Activated CD8-positive, alpha-beta memory T cell treated with anti-CD3 and anti-CD28 coated beads, Interleukin-2, amount 10 ng/mL, durations not matched to agents 7 days and 5 days (primary cell): ENCODE measurements at regions of chr10 and their contacts with region 1.

Region 1: DNA sequence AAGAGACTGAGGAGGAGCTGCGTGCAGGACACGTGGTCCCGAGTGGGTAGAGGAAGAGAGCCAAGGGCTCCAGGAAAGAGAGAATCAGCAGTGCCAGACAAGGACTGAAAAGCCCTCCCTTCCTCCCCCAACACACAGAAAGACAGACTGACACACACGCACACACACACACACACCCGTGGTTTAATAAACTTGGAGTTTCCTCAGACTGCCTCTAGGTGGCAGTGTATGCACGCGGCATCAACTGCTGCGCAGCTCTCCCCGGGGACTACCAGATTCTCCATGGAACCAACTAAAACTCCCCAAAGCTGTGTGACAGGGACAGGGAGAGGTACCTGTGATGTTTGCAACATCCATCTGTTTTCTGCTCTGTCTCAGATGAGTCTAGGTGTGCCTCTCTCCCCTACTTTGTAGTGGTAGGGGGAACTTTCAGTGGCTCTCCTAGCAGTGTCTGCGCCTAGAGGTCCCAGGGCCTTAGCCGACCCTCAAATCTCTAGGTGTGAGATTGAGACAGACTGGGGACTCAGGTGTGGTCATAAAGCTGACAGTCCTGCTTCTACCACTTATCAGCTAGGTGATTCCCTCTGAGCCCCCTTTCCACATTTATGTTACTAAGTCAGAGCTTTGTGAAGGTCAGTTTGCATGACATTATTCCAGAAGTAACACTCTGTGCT is 9.3 kb upstream of the TSPAN14 start:
- DNase-seq: peak; percentile 74
- ATAC-seq: peak; percentile 90
- H3K4me3 Mint-ChIP-seq: no peak overlapping the region
- H3K27ac Mint-ChIP-seq: peak overlapping the region; percentile 72
- H3K4me1 Mint-ChIP-seq: peaks cover 20% of the 10 kb centered on the region
- H3K27me3 Mint-ChIP-seq: peaks cover 12% of the 10 kb centered on the region

Region 2: DNA sequence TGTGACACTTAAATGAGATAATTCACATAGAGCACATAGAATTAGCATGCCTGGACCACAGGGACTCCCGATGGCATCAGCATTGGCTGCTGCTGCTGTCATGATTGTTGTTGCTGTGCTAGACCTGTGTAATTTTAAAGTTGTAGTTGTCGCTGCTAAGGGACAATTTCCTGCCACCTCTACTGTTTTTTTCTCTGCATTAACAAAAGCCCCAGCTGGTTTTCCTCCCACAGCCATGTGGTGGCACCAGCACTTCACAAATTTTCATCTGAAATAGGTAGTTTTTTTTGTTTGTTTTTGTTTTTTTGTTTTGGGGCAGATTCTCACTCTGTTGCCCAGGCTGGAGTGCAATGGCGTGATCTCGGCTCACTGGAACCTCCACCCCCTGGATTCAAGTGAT is 61.8 kb before region 1 on chr10:
- CTCF ChIA-PET with region 1: interaction called, 21 read pairs
- DNase-seq: peak; percentile 72
- ATAC-seq: peak; percentile 59
- H3K4me3 Mint-ChIP-seq: no peak overlapping the region
- H3K27ac Mint-ChIP-seq: no peak overlapping the region
- H3K4me1 Mint-ChIP-seq: peaks cover 14% of the 10 kb centered on the region
- H3K27me3 Mint-ChIP-seq: peaks cover 13% of the 10 kb centered on the region

Region 3: GRCh38 chr10:80397014-80397413 is 47.8 kb before region 1 on chr10:
- CTCF ChIA-PET with region 1: no interaction called
- DNase-seq: no peak
- ATAC-seq: no peak
- H3K4me3 Mint-ChIP-seq: no peak overlapping the region
- H3K27ac Mint-ChIP-seq: no peak overlapping the region
- H3K4me1 Mint-ChIP-seq: no peaks in the 10 kb centered on the region
- H3K27me3 Mint-ChIP-seq: peaks cover 8% of the 10 kb centered on the region

Region 4: DNA sequence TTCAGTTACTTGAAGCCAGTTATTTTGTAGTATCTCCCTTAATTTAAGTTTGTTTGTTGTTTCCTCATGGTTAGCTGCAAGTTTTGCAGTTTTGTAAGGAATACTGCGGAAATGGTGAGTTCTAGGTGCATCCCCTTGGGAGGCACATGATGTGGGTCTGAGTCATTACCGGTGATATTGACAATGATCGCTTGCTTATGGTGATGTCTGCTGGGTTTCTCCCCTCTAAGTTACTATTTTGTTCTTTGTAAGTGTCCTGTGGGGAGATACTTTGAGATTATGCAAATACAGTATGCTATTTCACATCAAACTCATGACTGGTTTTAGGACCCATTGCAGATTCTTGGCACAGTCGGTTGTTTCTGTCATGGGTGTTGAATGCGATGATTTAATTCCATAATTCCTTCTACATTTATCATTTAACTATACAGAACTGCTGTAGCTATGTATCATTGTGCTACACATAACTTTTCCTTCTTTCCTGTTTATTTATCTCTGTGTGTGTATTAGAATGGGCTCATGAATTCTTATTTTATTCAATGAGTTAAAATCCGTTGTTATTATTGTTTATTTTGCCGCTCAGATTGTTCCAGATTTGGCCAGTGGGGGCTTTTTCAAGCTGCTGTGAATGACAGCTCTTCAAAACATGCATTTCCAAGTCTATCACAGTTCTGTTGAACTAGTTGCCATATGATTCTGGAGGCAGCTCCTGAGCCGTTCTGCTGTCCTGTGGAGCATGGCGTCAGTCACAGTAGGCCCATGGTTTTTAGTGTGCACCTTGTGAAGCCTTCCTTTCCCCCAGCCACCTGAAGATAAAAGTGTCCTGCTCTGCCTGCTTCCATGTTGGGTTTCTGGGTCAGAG is 27.7 kb after region 1 on chr10:
- CTCF ChIA-PET with region 1: interaction called, 20 read pairs
- DNase-seq: peak; percentile 66
- ATAC-seq: peak; percentile 65
- H3K4me3 Mint-ChIP-seq: peak overlapping the region; percentile 2
- H3K27ac Mint-ChIP-seq: peak overlapping the region; percentile 78
- H3K4me1 Mint-ChIP-seq: peaks cover 82% of the 10 kb centered on the region
- H3K27me3 Mint-ChIP-seq: no peaks in the 10 kb centered on the region

Region 5: DNA sequence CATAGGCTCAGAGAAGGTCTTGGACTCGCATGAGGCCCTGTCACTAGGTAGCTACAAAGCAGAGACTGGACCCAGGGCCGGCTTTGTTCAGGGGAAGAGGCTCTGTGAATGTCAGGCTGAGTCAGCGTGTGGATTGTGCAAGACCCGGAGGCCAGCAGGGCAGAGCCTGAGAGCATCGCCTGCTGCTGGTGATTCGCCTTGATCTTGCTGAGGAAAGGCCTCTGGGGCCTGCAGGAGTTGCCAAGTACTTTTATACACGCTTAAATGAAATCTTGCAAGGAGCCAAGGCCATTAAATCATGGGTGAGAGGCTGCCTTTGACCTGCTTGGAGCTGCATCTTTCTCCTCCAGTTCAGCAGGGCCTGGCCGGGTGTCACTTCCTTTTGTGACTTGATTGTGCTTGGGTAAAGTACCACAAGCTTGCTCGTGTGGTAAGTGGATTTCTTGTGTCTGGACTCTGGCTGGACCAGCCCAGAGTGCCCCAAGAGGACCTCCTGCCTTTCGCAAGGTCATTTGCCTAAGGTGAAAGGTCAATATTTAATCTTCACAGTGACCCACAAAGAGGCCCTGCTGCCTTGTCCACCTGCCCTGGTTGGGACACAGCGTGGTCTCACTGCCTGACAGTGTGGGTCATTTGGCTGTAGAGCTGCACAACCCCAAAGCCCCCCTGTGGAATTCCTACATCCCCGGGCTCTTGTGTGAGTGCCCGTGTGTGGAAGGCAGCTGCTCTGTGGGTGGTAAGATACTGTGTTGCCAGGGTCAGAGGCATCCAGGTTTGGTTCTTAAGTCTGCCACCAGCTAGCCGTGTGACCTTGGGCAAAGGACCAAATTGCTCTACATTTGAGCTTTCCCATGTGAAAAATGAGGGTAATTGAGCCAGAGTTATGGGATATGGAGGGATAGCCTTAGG is 54.3 kb after region 1 on chr10:
- CTCF ChIA-PET with region 1: interaction called, 579 read pairs
- DNase-seq: peak; percentile 77
- ATAC-seq: peak; percentile 82
- H3K4me3 Mint-ChIP-seq: peak overlapping the region; percentile 17
- H3K27ac Mint-ChIP-seq: peak overlapping the region; percentile 83
- H3K4me1 Mint-ChIP-seq: peaks cover 94% of the 10 kb centered on the region
- H3K27me3 Mint-ChIP-seq: no peaks in the 10 kb centered on the region

Region 6: GRCh38 chr10:80596391-80597257 is 151.8 kb after region 1 on chr10:
- CTCF ChIA-PET with region 1: interaction called, 13 read pairs
- DNase-seq: peak; percentile 53
- ATAC-seq: peak; percentile 78
- H3K4me3 Mint-ChIP-seq: no peak overlapping the region
- H3K27ac Mint-ChIP-seq: no peak overlapping the region
- H3K4me1 Mint-ChIP-seq: no peaks in the 10 kb centered on the region
- H3K27me3 Mint-ChIP-seq: peaks cover 3% of the 10 kb centered on the region